GM12878 (cell line): ENCODE measurements at regions of chr19 and their contacts with region 1.

Region 1: DNA sequence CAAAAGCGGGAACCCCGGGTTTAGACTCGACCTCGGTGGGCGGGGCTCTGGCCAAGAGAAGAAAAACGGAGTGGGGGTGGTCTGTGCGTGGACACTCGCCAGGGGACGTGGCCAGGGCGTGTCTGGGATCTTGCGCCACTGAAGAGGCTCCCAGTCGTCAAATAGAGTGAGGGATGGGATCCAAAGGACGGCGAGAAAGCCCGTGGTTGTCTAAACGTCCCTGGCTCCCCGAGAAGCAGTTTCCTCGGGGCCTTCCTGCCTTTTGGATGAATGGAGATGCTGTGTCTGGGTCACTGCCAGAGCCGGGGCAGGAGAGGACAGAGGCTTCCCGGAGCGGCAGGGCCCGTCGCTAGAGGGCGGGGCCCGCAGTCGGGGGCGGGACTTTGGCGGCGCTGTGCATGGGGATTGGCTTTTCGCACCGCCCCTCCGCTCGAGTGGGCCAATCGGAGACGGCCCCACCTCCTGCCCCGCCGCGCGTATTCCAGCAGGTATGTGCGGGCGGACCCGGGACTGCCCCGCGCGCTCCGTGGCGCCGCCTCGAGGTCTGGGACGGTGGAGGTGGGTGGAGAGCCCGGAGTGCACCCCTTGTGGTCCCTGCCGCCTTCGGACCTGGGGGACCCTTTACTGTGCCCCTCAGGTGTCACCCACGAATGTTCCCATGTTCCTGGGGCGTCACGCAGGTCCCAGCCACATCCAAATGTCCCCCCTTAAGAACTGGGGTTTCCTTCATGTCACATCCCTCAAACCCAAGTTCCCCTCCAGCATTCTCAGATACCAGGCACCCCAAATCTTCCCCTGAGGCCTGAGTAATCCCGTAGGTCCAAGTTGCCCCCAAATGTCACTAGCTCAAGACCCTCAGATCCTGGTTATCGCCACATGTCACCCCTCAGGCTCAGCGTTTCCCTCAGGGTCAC is 38.3 kb downstream of the ZSWIM4 start:
- DNase-seq: no peak
- ATAC-seq: peak; percentile 90
- H3K4me3 ChIP-seq: peak overlapping the region; percentile 63; the same call in 1 of the 2 replicates
- H3K27ac ChIP-seq: peak overlapping the region; percentile 52
- H3K4me1 ChIP-seq: peaks cover 32% of the 10 kb centered on the region
- H3K27me3 ChIP-seq: no peaks in the 10 kb centered on the region
- CTCF ChIP-seq: peak; percentile 53 to 70 (median 60)
- EP300 ChIP-seq: no peak
- POLR2A ChIP-seq: peak; percentile 69
- RAD21 ChIP-seq: peak; percentile 32; the same call in 1 of the 2 replicates

Region 2: DNA sequence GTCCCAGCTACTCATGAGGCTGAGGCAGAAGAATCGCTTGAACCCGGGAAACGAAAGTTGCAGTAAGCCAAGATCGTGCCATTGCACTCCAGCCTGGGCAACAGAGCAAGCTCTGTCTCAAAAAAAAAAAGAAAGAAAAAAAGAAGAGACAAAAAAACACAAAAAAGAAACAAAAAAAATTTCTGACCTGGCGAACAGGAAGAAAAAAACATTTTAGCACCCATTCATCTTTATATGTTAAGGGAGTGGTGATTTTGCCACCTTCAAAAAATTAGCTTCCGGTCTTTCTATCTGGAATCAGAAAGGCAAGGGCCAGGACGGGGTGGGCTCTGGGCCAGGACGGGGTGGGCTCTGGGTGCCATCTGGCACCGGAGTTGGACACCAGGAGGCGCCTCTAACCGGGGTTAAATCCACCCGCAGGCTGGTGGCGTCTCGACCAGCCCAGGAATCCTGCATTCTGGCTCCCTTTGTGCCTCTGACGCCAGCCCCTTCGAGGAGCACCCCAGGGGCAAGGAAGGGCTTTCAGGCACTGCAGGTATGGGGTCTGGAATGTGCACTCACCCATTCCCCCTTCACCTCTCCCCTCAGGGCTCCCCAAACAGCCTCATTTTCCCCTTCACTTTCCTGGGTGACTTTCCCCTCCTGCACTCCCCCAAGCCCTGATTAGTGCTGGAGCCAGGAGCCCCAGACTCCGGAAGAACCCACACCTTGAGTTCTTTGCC is 48.7 kb before region 1 on chr19:
- CTCF ChIA-PET with region 1: interaction called, 12 read pairs
- POLR2A ChIA-PET with region 1: interaction called, 3 read pairs
- RAD21 ChIA-PET with region 1: interaction called, 6 read pairs
- SMC1A ChIA-PET with region 1: interaction called, 3 read pairs
- in situ Hi-C with region 1: no loop called
- intact Hi-C with region 1: no loop called
- DNase-seq: no peak
- ATAC-seq: peak; percentile 91
- H3K4me3 ChIP-seq: no peak overlapping the region
- H3K27ac ChIP-seq: no peak overlapping the region
- H3K4me1 ChIP-seq: peaks cover 26% of the 10 kb centered on the region
- H3K27me3 ChIP-seq: no peaks in the 10 kb centered on the region
- CTCF ChIP-seq: peak; percentile 47 to 79 (median 74)
- EP300 ChIP-seq: no peak
- POLR2A ChIP-seq: no peak
- RAD21 ChIP-seq: peak; percentile 76

Region 3: DNA sequence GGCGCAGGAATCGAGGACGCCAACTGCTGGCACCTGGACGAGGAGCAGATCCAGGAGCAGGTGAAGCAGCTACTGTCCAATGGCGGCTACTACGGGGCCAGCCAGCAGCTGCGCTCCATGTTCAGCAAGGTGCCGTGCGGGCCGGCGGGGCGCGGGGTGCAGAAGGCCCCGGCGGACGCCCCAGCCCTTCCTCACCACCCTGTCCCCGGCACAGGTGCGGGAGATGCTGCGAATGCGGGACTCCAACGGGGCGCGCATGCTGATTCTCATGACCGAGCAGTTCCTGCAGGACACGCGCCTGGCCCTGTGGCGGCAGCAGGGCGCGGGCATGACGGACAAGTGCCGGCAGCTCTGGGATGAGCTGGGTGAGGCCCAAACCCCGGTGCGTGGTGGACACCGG is 24.7 kb before region 1 on chr19:
- CTCF ChIA-PET with region 1: no interaction called
- POLR2A ChIA-PET with region 1: no interaction called
- RAD21 ChIA-PET with region 1: no interaction called
- SMC1A ChIA-PET with region 1: no interaction called
- in situ Hi-C with region 1: no loop called
- intact Hi-C with region 1: no loop called
- DNase-seq: no peak
- ATAC-seq: no peak
- H3K4me3 ChIP-seq: no peak overlapping the region
- H3K27ac ChIP-seq: no peak overlapping the region
- H3K4me1 ChIP-seq: no peaks in the 10 kb centered on the region
- H3K27me3 ChIP-seq: no peaks in the 10 kb centered on the region
- CTCF ChIP-seq: no peak
- EP300 ChIP-seq: no peak
- POLR2A ChIP-seq: no peak
- RAD21 ChIP-seq: no peak

Region 4: GRCh38 chr19:13846557-13847406 is 13.2 kb after region 1 on chr19:
- CTCF ChIA-PET with region 1: interaction called, 6 read pairs
- POLR2A ChIA-PET with region 1: interaction called, 31 read pairs
- RAD21 ChIA-PET with region 1: interaction called, 11 read pairs
- SMC1A ChIA-PET with region 1: interaction called, 5 read pairs
- in situ Hi-C with region 1: no loop called
- intact Hi-C with region 1: no loop called
- DNase-seq: peak; percentile 85
- ATAC-seq: peak; percentile 76
- H3K4me3 ChIP-seq: peak overlapping the region; percentile 64
- H3K27ac ChIP-seq: peak overlapping the region; percentile 91
- H3K4me1 ChIP-seq: peaks cover 41% of the 10 kb centered on the region
- H3K27me3 ChIP-seq: no peaks in the 10 kb centered on the region
- CTCF ChIP-seq: no peak
- EP300 ChIP-seq: peak; percentile 86 to 94
- POLR2A ChIP-seq: peak; percentile 72
- RAD21 ChIP-seq: no peak

Region 5: GRCh38 chr19:13920940-13921761 is 87.6 kb after region 1 on chr19:
- CTCF ChIA-PET with region 1: no interaction called
- POLR2A ChIA-PET with region 1: no interaction called
- RAD21 ChIA-PET with region 1: no interaction called
- SMC1A ChIA-PET with region 1: no interaction called
- in situ Hi-C with region 1: no loop called
- intact Hi-C with region 1: no loop called
- DNase-seq: peak; percentile 25
- ATAC-seq: peak; percentile 98
- H3K4me3 ChIP-seq: no peak overlapping the region
- H3K27ac ChIP-seq: no peak overlapping the region
- H3K4me1 ChIP-seq: no peaks in the 10 kb centered on the region
- H3K27me3 ChIP-seq: no peaks in the 10 kb centered on the region
- CTCF ChIP-seq: no peak
- EP300 ChIP-seq: no peak
- POLR2A ChIP-seq: no peak
- RAD21 ChIP-seq: no peak